ENCODE measurements at regions of chr11 and their contacts with region 1.

Region 1: GRCh38 chr11:2420502-2421225 is 20.1 kb downstream of the TSSC4 start:
- DNase-seq: peak; percentile 83 to 93 (median 92)
- H3K4me3 ChIP-seq: no peak overlapping the region
- H3K27ac ChIP-seq: no peak overlapping the region
- H3K4me1 ChIP-seq: peaks cover 0 to 3% (median 0%) of the 10 kb centered on the region in 3 donors
- H3K27me3 ChIP-seq: no peaks in the 10 kb centered on the region
- CTCF ChIP-seq: peak; percentile 98

Region 2: DNA sequence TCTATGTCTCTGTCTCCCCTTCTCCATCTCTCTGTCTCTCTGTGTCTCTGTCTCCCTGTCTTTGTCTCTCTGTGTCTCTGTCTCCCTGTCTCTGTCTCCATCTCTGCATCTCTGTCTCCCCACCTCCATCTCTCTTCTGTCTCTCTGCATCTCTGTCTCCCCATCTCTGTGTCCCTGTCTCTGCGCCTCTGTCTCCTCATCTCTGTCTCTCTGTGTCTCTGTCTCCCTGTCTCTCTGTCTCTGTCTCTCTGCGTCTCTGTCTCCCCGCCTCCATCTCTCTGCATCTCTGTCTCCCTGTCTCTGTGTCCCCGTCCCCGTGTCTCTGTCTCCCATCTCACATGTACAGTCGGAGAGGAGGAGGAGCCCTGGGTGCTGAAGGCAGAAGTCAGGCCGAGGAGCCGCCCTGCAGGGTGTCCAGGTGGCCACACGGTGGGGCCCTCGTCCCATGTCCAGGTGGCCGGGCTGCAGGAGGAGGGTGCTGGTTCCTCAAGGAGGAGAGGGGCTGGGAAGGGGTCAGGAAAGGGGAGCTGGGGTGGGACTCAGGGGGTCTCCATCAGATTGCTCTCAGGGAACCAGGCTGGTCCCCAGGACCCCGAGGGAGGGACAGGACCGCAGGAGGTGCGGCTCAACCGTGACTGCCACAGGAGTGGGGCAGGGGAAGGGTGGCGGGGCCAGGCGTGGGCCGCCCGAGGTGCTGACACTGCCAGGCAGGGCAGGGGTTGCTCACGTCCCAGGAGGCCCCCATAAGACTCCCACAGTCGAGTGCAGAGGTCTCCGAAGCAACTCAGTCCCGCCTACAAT is 223.5 kb before region 1 on chr11:
- intact Hi-C with region 1: loop called (anchors 5 kb)
- DNase-seq: peak; percentile 83 to 92 (median 89)
- H3K4me3 ChIP-seq: no peak overlapping the region
- H3K27ac ChIP-seq: no peak overlapping the region
- H3K4me1 ChIP-seq: peaks cover 0 to 3% (median 3%) of the 10 kb centered on the region in 3 donors
- H3K27me3 ChIP-seq: no peaks in the 10 kb centered on the region
- CTCF ChIP-seq: peak; percentile 94

Region 3: GRCh38 chr11:2269601-2270321 is 150.9 kb before region 1 on chr11:
- intact Hi-C with region 1: no loop called
- DNase-seq: peak; percentile 74 to 91 (median 88)
- H3K4me3 ChIP-seq: peak overlapping the region in 1 of 3 donors; percentile 41
- H3K27ac ChIP-seq: no peak overlapping the region
- H3K4me1 ChIP-seq: peaks cover 0 to 7% (median 0%) of the 10 kb centered on the region in 3 donors
- H3K27me3 ChIP-seq: peaks cover 3% of the 10 kb centered on the region
- CTCF ChIP-seq: peak; percentile 21

Region 4: GRCh38 chr11:2301631-2302305 is 118.9 kb before region 1 on chr11 and contains the starts of genes C11orf21 and TSPAN32:
- intact Hi-C with region 1: loop called (anchors 5 kb)
- DNase-seq: peak; percentile 21 to 77 (median 63)
- H3K4me3 ChIP-seq: no peak within 1 kb of the TSS
- H3K27ac ChIP-seq: no peak within 1 kb of the TSS
- H3K4me1 ChIP-seq: peaks cover 3 to 10% (median 6%) of the 10 kb centered on the region in 3 donors
- H3K27me3 ChIP-seq: no peaks in the 10 kb centered on the region
- CTCF ChIP-seq: no peak
- total RNA-seq, gene C11orf21: 4.9 TPM
- total RNA-seq, gene TSPAN32: 6.1 TPM

Region 5: DNA sequence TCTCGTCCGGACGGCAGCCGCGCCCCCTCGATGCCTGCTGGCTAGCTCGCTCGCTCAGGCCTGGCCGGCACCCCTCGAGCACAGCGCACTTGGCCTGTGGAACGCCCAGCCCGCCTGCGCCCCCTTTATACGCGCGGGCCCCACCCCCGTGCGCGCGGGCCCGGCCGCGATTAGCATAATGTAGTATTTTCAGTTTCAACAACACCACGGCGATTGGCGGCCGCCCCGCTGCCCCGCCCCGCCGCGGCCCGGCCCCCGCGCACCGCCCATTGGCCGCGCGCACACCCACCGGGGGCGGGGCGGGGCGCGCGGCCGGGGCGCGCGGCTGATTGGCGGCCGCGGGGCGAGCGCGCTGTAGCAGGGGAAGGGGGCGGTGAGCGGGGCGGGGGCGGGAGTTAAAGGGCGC is 465.0 kb after region 1 on chr11 and contains the start of gene CDKN1C:
- intact Hi-C with region 1: loop called (anchors 10 kb)
- DNase-seq: peak; percentile 93 to 97 (median 96)
- H3K4me3 ChIP-seq: peak within 1 kb of the TSS; percentile 57 to 74 (median 70)
- H3K27ac ChIP-seq: peak within 1 kb of the TSS; percentile 76 to 90
- H3K4me1 ChIP-seq: peaks cover 0 to 12% (median 6%) of the 10 kb centered on the region in 3 donors
- H3K27me3 ChIP-seq: no peaks in the 10 kb centered on the region
- CTCF ChIP-seq: no peak
- total RNA-seq, gene CDKN1C: 54.8 TPM